Activated CD4-positive, alpha-beta memory T cell treated with anti-CD3 and anti-CD28 coated beads for 36 hours (primary cell): ENCODE measurements at regions of chr9 and their contacts with region 1.

Region 1: GRCh38 chr9:33415501-33416038 is 13.2 kb upstream of the AQP7 start:
- DNase-seq: peak; percentile 97
- H3K4me3 Mint-ChIP-seq: peak overlapping the region; percentile 33
- H3K27ac Mint-ChIP-seq: peak overlapping the region; percentile 95
- H3K4me1 Mint-ChIP-seq: peaks cover 52% of the 10 kb centered on the region
- H3K27me3 Mint-ChIP-seq: no peaks in the 10 kb centered on the region

Region 2: GRCh38 chr9:33404788-33405362 is 10.7 kb before region 1 on chr9:
- CTCF ChIA-PET with region 1: interaction called, 32 read pairs
- POLR2A ChIA-PET with region 1: interaction called, 3 read pairs
- intact Hi-C with region 1: no loop called
- DNase-seq: no peak
- H3K4me3 Mint-ChIP-seq: no peak overlapping the region
- H3K27ac Mint-ChIP-seq: no peak overlapping the region
- H3K4me1 Mint-ChIP-seq: peaks cover 7% of the 10 kb centered on the region
- H3K27me3 Mint-ChIP-seq: no peaks in the 10 kb centered on the region

Region 3: DNA sequence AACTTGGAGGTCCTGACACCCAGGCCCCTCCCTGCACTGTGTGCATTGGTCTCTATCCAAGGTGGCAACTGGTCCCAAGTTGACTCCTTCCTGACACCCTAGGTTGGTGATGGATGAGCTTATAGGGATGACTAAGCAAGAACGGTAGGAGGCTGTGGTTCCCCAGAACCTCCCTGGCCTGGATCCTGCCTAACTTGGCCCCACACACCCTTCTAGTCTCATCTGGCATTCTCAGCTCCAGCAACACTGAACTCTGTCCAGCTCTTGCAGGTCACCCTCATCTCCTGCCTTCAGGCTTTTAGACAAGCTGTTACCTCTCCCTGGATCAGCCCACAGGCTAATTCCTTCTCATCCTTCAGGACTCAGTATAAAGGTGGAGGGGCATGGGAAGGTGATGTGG is 15.4 kb after region 1 on chr9:
- CTCF ChIA-PET with region 1: interaction called, 28 read pairs
- POLR2A ChIA-PET with region 1: no interaction called
- intact Hi-C with region 1: no loop called
- DNase-seq: no peak
- H3K4me3 Mint-ChIP-seq: no peak overlapping the region
- H3K27ac Mint-ChIP-seq: no peak overlapping the region
- H3K4me1 Mint-ChIP-seq: peaks cover 18% of the 10 kb centered on the region
- H3K27me3 Mint-ChIP-seq: no peaks in the 10 kb centered on the region

Region 4: GRCh38 chr9:33446946-33447798 is 31.6 kb after region 1 on chr9 and contains the start of gene AQP3:
- CTCF ChIA-PET with region 1: interaction called, 191 read pairs
- POLR2A ChIA-PET with region 1: interaction called, 28 read pairs
- intact Hi-C with region 1: loop called (anchors 1 kb)
- DNase-seq: peak; percentile 84
- H3K4me3 Mint-ChIP-seq: peak within 1 kb of the TSS; percentile 89
- H3K27ac Mint-ChIP-seq: peak within 1 kb of the TSS; percentile 94
- H3K4me1 Mint-ChIP-seq: peaks cover 50% of the 10 kb centered on the region
- H3K27me3 Mint-ChIP-seq: no peaks in the 10 kb centered on the region
- total RNA-seq, gene AQP3: 19.4 to 20.2 TPM

Region 5: DNA sequence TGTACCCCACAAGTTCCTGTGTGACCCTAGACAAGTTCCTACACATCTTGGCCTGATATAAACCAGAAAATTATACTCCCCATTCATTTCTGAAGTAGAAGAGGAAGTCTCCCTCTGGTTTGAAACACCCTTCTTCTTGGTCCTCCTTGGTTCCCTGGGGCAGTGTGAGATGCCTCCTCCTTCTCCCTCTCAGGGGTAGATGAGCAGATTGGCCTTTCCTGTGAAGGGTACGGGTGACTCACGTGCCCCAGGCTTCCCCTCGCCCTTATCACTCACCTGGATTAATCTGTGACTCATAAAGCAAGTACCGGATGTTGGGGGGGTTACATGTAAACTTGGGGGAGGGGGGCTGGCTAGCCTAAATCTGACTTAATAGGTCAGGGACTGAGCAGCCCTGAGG is 42.9 kb after region 1 on chr9:
- CTCF ChIA-PET with region 1: interaction called, 191 read pairs
- POLR2A ChIA-PET with region 1: interaction called, 4 read pairs
- intact Hi-C with region 1: no loop called
- DNase-seq: peak; percentile 84
- H3K4me3 Mint-ChIP-seq: peak overlapping the region; percentile 13
- H3K27ac Mint-ChIP-seq: peak overlapping the region; percentile 89
- H3K4me1 Mint-ChIP-seq: peaks cover 58% of the 10 kb centered on the region
- H3K27me3 Mint-ChIP-seq: no peaks in the 10 kb centered on the region

Region 6: DNA sequence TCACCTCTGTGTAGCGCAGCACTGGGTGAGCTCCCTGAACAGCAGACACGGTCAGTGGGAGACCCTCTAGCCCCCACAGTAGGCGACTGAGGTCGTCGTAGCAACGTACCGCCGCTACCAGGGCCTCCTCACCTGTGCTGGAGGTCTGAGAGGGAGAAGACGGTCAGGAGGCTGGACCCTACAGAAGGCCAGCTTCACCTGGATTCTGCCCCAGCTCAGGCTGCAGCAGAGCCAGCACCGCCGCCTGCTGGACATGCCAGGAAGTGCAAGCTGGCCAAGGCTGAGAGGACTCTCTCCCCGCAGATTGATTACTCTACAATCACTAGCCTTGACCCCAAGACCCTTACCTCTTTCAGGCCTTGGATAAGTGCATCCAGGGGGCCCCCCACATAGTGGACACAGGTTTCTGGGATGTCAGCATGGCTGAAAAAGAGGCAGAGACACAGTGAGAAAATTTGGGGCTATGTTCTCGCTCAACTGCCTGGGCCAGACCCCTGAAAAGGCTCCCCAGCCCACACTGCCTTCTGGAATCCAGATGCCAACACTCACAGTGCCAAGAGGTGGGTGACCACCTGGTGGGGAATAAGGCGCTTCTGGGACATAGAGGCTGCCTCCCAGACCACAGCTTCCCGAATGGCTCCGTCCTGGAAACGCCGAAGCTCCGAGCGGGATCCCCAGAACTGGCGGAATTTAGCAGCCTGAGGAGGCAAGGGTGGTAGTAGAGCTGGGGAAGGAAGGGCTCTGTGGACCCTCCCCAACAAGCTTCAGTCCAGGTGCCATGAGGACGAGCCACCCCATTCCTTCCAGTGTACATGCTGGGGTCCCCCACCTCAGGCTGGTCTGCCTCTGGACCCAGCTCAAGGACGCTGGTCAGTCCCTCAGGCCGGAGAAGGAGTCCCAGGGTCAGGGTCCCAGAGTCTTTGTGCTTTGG is 51.3 kb after region 1 on chr9:
- CTCF ChIA-PET with region 1: interaction called, 70 read pairs
- POLR2A ChIA-PET with region 1: interaction called, 7 read pairs
- intact Hi-C with region 1: no loop called
- DNase-seq: peak; percentile 80
- H3K4me3 Mint-ChIP-seq: no peak overlapping the region
- H3K27ac Mint-ChIP-seq: no peak overlapping the region
- H3K4me1 Mint-ChIP-seq: peaks cover 5% of the 10 kb centered on the region
- H3K27me3 Mint-ChIP-seq: no peaks in the 10 kb centered on the region

Region 7: GRCh38 chr9:33473643-33474352 is 58.2 kb after region 1 on chr9 and contains the start of gene NOL6:
- CTCF ChIA-PET with region 1: interaction called, 41 read pairs
- POLR2A ChIA-PET with region 1: interaction called, 5 read pairs
- intact Hi-C with region 1: no loop called
- DNase-seq: peak; percentile 99
- H3K4me3 Mint-ChIP-seq: peak within 1 kb of the TSS; percentile 99
- H3K27ac Mint-ChIP-seq: peak within 1 kb of the TSS; percentile 93
- H3K4me1 Mint-ChIP-seq: peaks cover 24% of the 10 kb centered on the region
- H3K27me3 Mint-ChIP-seq: no peaks in the 10 kb centered on the region
- total RNA-seq, gene NOL6: 38.1 to 39.7 TPM

Region 8: GRCh38 chr9:33714989-33715388 is 299.4 kb after region 1 on chr9:
- CTCF ChIA-PET with region 1: no interaction called
- POLR2A ChIA-PET with region 1: no interaction called
- intact Hi-C with region 1: no loop called
- DNase-seq: no peak
- H3K4me3 Mint-ChIP-seq: no peak overlapping the region
- H3K27ac Mint-ChIP-seq: no peak overlapping the region
- H3K4me1 Mint-ChIP-seq: peaks cover 3% of the 10 kb centered on the region
- H3K27me3 Mint-ChIP-seq: peaks cover 8% of the 10 kb centered on the region

Region 9: GRCh38 chr9:34001298-34001697 is 585.7 kb after region 1 on chr9:
- CTCF ChIA-PET with region 1: no interaction called
- POLR2A ChIA-PET with region 1: no interaction called
- intact Hi-C with region 1: no loop called
- DNase-seq: no peak
- H3K4me3 Mint-ChIP-seq: no peak overlapping the region
- H3K27ac Mint-ChIP-seq: no peak overlapping the region
- H3K4me1 Mint-ChIP-seq: no peaks in the 10 kb centered on the region
- H3K27me3 Mint-ChIP-seq: no peaks in the 10 kb centered on the region